ENCODE measurements at regions of chr3 and their contacts with region 1.

Region 1: DNA sequence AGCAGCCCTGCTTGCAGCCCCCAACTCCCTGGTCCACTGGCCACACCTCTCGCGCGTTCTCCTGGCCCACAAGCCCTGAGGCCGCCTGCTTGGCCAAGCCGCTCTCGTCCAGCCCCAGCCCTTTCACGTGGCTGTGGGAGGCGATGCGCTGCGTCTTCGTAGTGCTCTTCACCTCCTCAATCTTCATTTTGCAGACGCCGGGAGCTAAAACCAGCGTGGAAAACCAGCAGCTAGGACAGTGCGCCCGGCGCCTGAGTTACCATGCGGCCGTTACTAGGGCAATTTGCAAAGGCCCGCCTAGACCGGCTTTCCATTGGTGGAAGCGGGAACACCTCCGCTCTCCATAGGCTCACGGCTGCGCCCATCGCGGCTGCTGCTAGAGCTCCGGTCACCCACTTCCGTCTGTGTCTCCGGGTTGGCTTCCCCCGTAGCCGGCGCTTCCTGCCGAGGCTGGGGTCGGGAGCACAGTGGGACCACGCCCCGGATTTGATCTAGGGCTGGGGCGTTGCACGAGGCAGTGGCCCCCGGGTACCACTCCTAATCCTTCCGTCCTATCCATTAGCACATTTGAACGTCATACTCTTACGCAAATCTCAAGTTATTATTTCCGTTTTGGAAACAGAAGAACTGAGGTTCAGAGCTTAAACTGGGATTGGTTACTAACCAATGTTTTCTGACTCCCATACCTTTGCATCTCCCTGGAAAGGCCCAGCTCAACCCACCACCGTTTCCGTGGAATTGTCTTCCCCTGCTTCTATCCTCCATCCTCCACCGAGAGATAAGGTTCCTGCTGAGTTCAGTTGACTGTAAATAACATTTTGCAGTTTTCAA is at the start of gene RUVBL1:
- DNase-seq: peak; percentile 95
- H3K4me3 Mint-ChIP-seq: peak within 1 kb of the TSS; percentile 99
- H3K27ac Mint-ChIP-seq: peak within 1 kb of the TSS; percentile 99
- H3K4me1 Mint-ChIP-seq: peaks cover 24% of the 10 kb centered on the region
- H3K27me3 Mint-ChIP-seq: peaks cover 1% of the 10 kb centered on the region
- total RNA-seq, gene RUVBL1: 135 and 137 TPM in 2 replicates

Region 2: GRCh38 chr3:127598841-127599570 is 524.7 kb before region 1 on chr3:
- intact Hi-C with region 1: loop called (anchors 1 kb)
- DNase-seq: no peak
- H3K4me3 Mint-ChIP-seq: peak overlapping the region; percentile 100
- H3K27ac Mint-ChIP-seq: peak overlapping the region; percentile 99
- H3K4me1 Mint-ChIP-seq: peaks cover 45% of the 10 kb centered on the region
- H3K27me3 Mint-ChIP-seq: no peaks in the 10 kb centered on the region

Region 3: DNA sequence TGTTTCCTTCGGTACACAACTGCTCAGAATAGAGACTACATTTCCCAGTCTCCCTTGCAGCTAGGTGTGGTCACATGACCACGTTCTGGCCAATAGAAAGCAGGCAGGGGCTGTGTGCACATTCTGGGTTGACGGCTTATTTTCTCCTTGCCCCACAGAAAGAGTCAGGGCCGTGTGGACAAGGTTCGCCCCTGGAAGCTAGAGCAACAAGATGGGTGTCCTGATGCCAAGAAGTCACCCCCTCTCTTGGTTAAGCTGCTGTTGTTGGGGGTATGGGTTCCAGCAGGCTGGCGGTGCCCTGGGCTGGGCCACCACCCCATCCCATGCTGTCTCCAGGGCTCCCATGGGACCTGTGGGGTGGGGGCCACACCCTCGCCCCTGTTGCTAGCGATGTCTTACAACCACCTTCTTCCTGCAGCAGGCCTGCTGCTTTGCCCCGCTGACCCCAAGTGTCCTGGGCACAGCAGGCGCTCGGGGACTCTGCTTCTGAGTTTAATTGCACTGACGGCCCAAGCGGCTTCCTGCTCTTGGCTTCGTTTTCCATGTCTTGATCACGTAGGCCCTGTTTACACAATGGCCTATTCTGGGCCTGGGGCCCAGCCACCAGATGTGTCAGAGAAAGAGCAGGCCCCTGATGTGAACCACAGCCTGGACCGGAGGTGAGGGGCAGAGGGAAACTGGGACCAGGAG is 426.1 kb before region 1 on chr3:
- intact Hi-C with region 1: loop called (anchors 5 kb)
- DNase-seq: peak; percentile 38
- H3K4me3 Mint-ChIP-seq: no peak overlapping the region
- H3K27ac Mint-ChIP-seq: no peak overlapping the region
- H3K4me1 Mint-ChIP-seq: no peaks in the 10 kb centered on the region
- H3K27me3 Mint-ChIP-seq: peaks cover 4% of the 10 kb centered on the region

Region 4: GRCh38 chr3:128075516-128076482 is 48.0 kb before region 1 on chr3:
- intact Hi-C with region 1: loop called (anchors 2 kb)
- DNase-seq: peak; percentile 76
- H3K4me3 Mint-ChIP-seq: peak overlapping the region; percentile 62
- H3K27ac Mint-ChIP-seq: no peak overlapping the region
- H3K4me1 Mint-ChIP-seq: peaks cover 7% of the 10 kb centered on the region
- H3K27me3 Mint-ChIP-seq: peaks cover 10% of the 10 kb centered on the region

Region 5: DNA sequence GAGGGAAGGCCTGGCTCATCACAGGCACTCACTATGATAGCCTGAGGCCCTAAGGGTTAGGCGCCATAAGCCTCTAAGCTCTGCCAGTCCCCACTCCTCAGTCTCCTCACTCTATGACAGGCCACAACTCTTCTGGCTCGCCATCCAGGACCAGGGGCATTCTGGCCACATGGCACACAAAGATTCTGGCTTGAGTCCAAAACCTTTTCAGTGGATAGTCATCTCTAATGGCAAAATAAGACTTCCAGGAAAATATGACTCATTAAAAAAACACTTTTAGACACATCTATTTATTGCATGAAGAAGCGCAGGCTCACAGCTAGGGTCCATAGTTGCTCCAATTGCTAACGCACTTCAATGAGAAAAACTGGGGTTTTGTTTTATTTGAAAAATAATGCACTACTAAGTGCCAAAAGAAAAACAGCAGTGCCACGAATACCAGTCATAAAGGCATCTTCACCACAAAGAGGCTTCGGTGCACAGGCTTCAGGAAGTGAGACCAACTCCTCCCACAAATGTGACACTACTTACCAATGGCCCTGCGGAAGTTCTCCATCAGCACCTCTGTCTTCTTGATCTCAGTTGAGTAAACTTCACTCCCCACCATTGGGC is 11.3 kb before region 1 on chr3:
- intact Hi-C with region 1: loop called (anchors 1 kb)
- DNase-seq: peak; percentile 21
- H3K4me3 Mint-ChIP-seq: peak overlapping the region; percentile 15
- H3K27ac Mint-ChIP-seq: peak overlapping the region; percentile 90
- H3K4me1 Mint-ChIP-seq: peaks cover 44% of the 10 kb centered on the region
- H3K27me3 Mint-ChIP-seq: no peaks in the 10 kb centered on the region

Region 6: GRCh38 chr3:128153156-128154041 is 29.6 kb after region 1 on chr3 and contains the start of gene EEFSEC:
- intact Hi-C with region 1: loop called (anchors 1 kb)
- DNase-seq: peak; percentile 82
- H3K4me3 Mint-ChIP-seq: peak within 1 kb of the TSS; percentile 94
- H3K27ac Mint-ChIP-seq: peak within 1 kb of the TSS; percentile 98
- H3K4me1 Mint-ChIP-seq: peaks cover 31% of the 10 kb centered on the region
- H3K27me3 Mint-ChIP-seq: peaks cover 3% of the 10 kb centered on the region
- total RNA-seq, gene EEFSEC: 18.7 and 19.5 TPM in 2 replicates